ENCODE measurements at regions of chr1 and their contacts with region 1.

Region 1: DNA sequence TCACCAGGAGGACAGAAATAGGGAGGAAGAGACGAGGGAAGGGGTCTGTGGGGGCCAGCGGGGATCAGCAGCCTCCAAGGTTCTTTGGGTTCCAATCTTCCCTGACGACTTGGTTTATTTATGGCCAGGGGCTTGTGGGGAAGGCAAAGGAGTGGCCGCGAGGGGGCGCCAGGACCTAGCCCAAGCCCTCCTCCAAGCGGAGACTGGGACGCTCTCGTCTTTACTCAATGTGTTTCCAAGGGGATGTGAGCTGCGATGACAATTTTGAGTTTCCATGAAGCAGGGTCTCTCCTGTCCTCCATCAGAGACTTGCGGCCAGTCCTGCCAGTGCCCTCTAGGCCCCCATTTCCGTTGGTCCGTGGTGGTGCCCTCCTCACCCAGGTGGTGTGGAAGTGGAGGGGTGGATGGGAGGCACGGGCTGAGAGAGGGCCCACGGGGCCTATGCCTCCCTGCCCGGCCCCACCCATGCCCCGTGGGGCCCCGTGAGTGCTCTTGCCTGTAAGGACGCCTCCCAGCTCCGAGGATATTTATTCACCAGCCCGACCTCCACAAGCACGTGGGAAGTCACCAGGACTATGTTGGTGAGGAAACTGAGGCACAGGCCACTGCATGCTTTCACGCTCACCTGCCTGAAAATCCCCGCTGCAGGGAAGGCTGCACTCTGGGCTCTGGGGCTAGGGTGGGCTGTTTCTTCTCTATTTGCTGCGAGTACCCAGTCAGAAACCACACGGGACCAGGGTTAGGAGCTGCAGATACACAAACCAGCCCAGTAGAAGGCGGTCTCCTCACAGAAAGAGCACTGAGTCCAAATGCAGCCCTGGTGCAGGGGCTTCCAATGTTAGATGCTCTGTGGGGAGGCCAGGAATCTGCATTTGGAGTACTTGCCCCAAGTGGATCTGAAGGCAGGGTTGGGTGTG is 26.5 kb downstream of the DMRTB1 start:
- DNase-seq: peak; percentile 80 to 93
- ATAC-seq: peak; percentile 80
- H3K4me3 ChIP-seq: no peak overlapping the region
- H3K27ac ChIP-seq: no peak overlapping the region
- H3K4me1 ChIP-seq: no peaks in the 10 kb centered on the region
- H3K27me3 ChIP-seq: no peaks in the 10 kb centered on the region

Region 2: GRCh38 chr1:53592521-53592982 is 106.8 kb after region 1 on chr1:
- intact Hi-C with region 1: loop called in 1 of 2 experiments (anchors 5 kb)
- DNase-seq: peak; percentile 55 to 66
- ATAC-seq: peak; percentile 8
- H3K4me3 ChIP-seq: no peak overlapping the region
- H3K27ac ChIP-seq: no peak overlapping the region
- H3K4me1 ChIP-seq: no peaks in the 10 kb centered on the region
- H3K27me3 ChIP-seq: no peaks in the 10 kb centered on the region

Region 3: DNA sequence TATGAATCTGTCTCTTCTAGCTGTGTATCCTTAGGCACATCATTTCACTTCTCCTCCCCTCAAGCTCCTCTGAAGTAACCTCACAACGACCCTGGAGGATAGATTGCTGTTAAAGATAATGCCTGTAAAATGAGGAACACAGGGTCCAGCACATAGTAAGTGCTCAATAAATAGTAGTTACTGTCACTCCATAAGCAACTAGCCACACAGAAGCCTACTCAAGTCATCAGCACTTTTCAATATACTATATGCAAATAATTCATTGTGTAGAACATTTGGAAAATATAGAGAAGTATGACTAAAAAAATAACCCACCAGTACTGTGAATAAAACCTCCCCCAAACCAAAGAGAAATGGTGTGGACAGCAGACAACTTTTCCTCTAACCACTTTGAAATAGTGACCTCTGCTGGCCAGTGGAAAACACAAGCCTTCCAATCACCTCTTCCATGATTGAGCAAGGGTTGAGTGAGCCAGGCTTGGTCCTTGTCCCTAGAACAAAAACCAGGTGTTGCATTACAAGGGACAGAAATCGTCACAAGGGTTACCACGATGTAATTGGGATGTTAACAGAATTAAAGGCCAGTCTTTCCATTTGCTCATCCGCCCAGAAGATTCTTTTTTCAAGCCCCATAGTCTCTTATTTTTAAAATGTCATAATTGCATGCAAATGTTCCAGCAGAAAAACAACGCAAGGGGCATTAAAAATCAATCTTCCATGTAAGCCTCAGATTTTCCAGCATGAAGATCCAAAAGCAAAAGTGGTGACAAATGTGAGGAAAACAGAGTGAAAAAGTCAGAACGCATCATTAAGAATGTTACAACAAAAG is 269.0 kb after region 1 on chr1:
- intact Hi-C with region 1: loop called (anchors 1 to 2 kb)
- DNase-seq: no peak
- ATAC-seq: no peak
- H3K4me3 ChIP-seq: no peak overlapping the region
- H3K27ac ChIP-seq: no peak overlapping the region
- H3K4me1 ChIP-seq: no peaks in the 10 kb centered on the region
- H3K27me3 ChIP-seq: no peaks in the 10 kb centered on the region

Measured in aorta (tissue), 5 donors.